Gastrocnemius medialis (tissue), 4 donors: ENCODE measurements at regions of chr14 and their contacts with region 1.

Region 1: GRCh38 chr14:81170104-81170828 is 50.5 kb downstream of the GTF2A1 start:
- DNase-seq: peak; percentile 89 to 93
- ATAC-seq: peak; percentile 97 to 99
- H3K4me3 ChIP-seq: peak overlapping the region; percentile 61 to 85 (median 74)
- H3K27ac ChIP-seq: peak overlapping the region; percentile 91 to 96 (median 94)
- H3K4me1 ChIP-seq: peaks cover 16 to 20% of the 10 kb centered on the region in 2 donors
- H3K27me3 ChIP-seq: no peaks in the 10 kb centered on the region
- CTCF ChIP-seq: peak; percentile 86 to 95 (median 92)
- POLR2A ChIP-seq: peak; percentile 61 to 75

Region 2: DNA sequence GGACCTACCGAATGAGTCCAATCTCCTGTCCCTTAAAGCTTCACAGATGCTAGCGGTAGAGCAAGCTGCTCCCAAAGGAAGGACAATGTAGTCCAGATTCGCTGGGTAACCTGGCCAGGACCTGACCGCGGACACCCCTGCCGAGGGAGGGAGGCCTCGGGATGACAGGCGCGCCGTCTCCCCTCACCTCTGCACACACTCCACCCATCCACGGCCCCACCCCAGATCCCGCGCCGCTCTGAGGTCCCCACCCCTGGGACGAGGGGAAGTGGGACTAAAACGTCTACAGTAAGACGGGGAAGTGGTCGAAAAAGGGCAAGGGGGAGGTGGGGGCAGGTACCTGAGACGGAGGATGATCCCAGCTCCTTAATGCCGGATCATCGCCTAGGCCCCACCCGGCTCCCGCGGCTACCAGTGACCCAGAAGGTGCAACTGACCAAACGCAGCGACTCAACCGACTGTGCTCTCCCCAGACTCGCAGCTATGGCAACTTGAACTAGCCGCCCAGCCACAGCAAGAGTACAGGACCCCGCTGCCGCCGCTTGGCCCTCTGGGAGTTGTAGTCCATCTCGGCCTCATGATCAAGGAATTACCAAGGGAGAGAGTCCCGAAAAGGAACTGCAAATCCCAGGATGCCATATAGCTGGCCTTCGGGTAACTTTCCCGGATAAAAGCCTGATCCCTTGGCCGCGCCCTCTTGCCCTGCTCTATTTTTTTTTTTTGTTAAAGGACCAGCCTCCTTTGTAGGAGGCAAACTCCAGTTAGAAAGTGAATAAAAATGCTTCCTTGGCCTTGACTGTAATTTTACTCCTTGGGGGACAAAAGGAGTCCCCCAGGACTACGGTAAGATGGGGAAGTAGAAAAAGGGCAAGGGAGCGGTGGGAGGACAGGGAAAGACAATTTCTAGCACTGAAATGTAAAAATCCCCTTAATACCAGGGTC is 228.8 kb before region 1 on chr14 and contains the start of gene CEP128:
- in situ Hi-C with region 1: loop called in 1 of 4 experiments (anchors 10 kb)
- intact Hi-C with region 1: no loop called
- DNase-seq: peak; percentile 92 to 94
- ATAC-seq: peak; percentile 100
- H3K4me3 ChIP-seq: peak within 1 kb of the TSS; percentile 61 to 85 (median 80)
- H3K27ac ChIP-seq: peak within 1 kb of the TSS; percentile 70 to 79 (median 74)
- H3K4me1 ChIP-seq: peaks cover 5 to 8% of the 10 kb centered on the region in 2 donors
- H3K27me3 ChIP-seq: no peaks in the 10 kb centered on the region
- CTCF ChIP-seq: no peak
- POLR2A ChIP-seq: no peak
- total RNA-seq, gene CEP128: 0.82 to 3.6 (median 1.6) TPM

Region 3: GRCh38 chr14:80954687-80955299 is 215.5 kb before region 1 on chr14:
- in situ Hi-C with region 1: loop called in 1 of 4 experiments (anchors 10 kb)
- intact Hi-C with region 1: loop called (anchors 5 kb)
- DNase-seq: peak; percentile 59 to 64
- ATAC-seq: peak; percentile 90 to 93
- H3K4me3 ChIP-seq: peak overlapping the region; percentile 61 to 72 (median 68)
- H3K27ac ChIP-seq: no peak overlapping the region
- H3K4me1 ChIP-seq: peaks cover 0 to 7% of the 10 kb centered on the region in 2 donors
- H3K27me3 ChIP-seq: no peaks in the 10 kb centered on the region
- CTCF ChIP-seq: peak; percentile 75 to 88 (median 85)
- POLR2A ChIP-seq: no peak

Region 4: GRCh38 chr14:80996049-80996901 is 174.0 kb before region 1 on chr14:
- in situ Hi-C with region 1: loop called (anchors 5 to 10 kb)
- intact Hi-C with region 1: loop called (anchors 2 kb)
- DNase-seq: peak; percentile 26 to 32
- ATAC-seq: peak; percentile 99
- H3K4me3 ChIP-seq: peak overlapping the region in 1 of 4 donors; percentile 21
- H3K27ac ChIP-seq: no peak overlapping the region
- H3K4me1 ChIP-seq: no peaks in the 10 kb centered on the region
- H3K27me3 ChIP-seq: no peaks in the 10 kb centered on the region
- CTCF ChIP-seq: peak; percentile 43 to 71 (median 54)
- POLR2A ChIP-seq: no peak

Region 5: DNA sequence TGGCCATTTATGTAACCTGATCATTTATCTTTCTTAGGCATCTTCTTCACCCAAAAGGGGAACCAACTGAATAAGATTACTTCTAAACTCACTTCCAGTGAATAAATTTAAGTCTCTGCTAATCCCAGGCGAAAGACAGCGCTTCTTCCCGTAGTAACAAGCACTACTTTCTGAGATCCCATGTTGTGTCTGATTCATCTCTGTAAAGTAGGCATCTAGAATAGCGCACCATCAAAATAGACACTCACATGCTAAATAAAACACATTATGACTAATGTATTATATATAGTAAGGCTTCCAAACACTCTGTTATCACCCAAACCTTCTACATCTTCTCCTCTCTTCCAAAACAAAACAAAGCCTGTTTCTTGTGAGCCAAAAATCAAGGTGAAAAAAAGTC is 35.4 kb after region 1 on chr14:
- in situ Hi-C with region 1: no loop called
- intact Hi-C with region 1: loop called (anchors 2 kb)
- DNase-seq: no peak
- ATAC-seq: peak; percentile 97 to 99
- H3K4me3 ChIP-seq: no peak overlapping the region
- H3K27ac ChIP-seq: peak overlapping the region; percentile 83 to 91 (median 89)
- H3K4me1 ChIP-seq: peaks cover 37 to 55% of the 10 kb centered on the region in 2 donors
- H3K27me3 ChIP-seq: no peaks in the 10 kb centered on the region
- CTCF ChIP-seq: no peak
- POLR2A ChIP-seq: peak; percentile 33 to 64